Posterior vena cava (tissue), 2 donors: ENCODE measurements at regions of chr4 and their contacts with region 1.

Region 1: GRCh38 chr4:172412851-172413580 is 599.8 kb downstream of the GALNTL6 start:
- DNase-seq: no peak

Region 2: GRCh38 chr4:170705907-170706306 is 1707.1 kb before region 1 on chr4:
- intact Hi-C with region 1: no loop called
- DNase-seq: no peak

Region 3: DNA sequence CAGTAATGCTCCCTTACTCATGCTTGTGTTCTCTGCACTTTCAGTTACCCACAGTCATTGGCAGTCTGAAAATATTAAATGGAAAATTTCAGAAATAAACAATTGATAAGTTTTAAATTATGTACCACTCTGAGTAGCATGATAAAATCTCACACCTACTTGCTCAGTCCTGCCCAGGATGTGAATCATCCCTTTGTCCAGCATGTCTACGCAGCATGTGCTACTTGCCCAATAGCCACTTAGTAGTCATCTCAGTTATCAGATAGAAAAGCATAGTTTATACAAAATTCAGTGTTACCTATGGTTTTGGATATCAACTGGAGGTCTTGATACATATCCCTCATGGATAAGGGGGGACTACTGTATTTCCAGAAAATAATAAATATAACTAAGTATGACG is 22.7 kb before region 1 on chr4:
- intact Hi-C with region 1: loop called in 1 of 2 experiments (anchors 2 kb)
- DNase-seq: no peak